MCF 10A (cell line): ENCODE measurements at regions of chr3 and their contacts with region 1.

Region 1: DNA sequence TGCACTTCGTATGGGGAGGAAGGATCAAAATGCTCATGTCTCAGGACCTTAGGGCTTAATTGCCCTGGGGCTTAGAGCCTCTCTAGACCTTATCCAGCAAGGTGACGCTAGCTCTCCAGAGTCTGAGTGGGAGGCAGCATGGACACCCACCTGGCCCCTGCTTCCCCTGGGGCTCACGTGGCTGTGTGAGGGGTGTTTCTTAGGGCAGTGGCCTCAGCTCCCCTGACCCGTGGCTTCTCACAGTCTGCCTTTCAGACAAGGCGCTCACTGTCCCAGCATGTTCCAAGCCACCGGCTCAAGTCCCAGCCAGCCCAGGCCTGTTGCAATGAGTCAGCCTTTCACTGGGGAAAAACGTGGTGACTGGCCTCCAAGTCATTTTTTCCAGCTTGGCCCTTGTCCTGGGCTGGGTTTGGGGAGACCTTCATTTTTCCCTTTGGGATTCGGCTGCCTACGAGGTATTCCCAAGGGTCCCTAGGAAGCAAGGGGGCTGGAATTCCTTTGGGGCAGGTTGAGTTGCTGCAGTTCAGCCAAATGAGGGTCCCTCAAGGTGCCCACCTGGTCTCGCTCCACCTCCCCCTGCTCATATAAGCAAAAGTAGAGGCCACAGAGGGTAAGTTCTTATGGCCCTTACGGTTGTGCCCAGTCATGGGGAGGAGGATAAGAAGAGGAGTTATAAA is 15.7 kb downstream of the BHLHE40 start:
- DNase-seq: peak; percentile 98
- H3K4me3 Mint-ChIP-seq: no peak overlapping the region
- H3K27ac Mint-ChIP-seq: peak overlapping the region; percentile 89
- H3K4me1 Mint-ChIP-seq: peaks cover 23% of the 10 kb centered on the region
- H3K27me3 Mint-ChIP-seq: no peaks in the 10 kb centered on the region
- CTCF ChIP-seq: no peak

Region 2: DNA sequence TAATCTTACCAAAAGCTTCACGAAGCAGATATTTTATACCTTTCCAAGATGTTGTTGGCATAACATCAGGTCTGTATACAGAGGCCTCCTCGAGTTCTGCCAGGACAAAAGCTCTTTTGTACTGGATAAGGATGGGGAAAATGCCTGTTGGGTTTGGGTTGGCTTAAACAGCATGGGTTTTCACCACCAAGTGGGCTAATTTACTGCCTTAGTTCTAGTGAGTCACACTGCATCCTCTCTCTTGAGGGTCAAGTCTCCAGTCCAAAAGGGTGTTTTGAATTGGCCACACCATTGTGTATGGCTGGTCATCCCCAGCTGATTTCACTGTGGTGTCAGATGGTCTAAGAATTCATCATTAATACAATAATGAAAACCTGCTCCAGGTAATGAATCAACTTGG is 41.8 kb before region 1 on chr3:
- CTCF ChIA-PET with region 1: no interaction called
- POLR2A ChIA-PET with region 1: no interaction called
- intact Hi-C with region 1: no loop called
- DNase-seq: no peak
- H3K4me3 Mint-ChIP-seq: no peak overlapping the region
- H3K27ac Mint-ChIP-seq: no peak overlapping the region
- H3K4me1 Mint-ChIP-seq: no peaks in the 10 kb centered on the region
- H3K27me3 Mint-ChIP-seq: no peaks in the 10 kb centered on the region
- CTCF ChIP-seq: no peak

Region 3: GRCh38 chr3:4963669-4964589 is 31.0 kb before region 1 on chr3:
- CTCF ChIA-PET with region 1: no interaction called
- POLR2A ChIA-PET with region 1: no interaction called
- intact Hi-C with region 1: no loop called
- DNase-seq: no peak
- H3K4me3 Mint-ChIP-seq: no peak overlapping the region
- H3K27ac Mint-ChIP-seq: no peak overlapping the region
- H3K4me1 Mint-ChIP-seq: no peaks in the 10 kb centered on the region
- H3K27me3 Mint-ChIP-seq: no peaks in the 10 kb centered on the region
- CTCF ChIP-seq: no peak

Region 4: GRCh38 chr3:5006755-5007202 is 11.8 kb after region 1 on chr3:
- CTCF ChIA-PET with region 1: interaction called, 3 read pairs
- POLR2A ChIA-PET with region 1: interaction called, 14 read pairs
- intact Hi-C with region 1: no loop called
- DNase-seq: no peak
- H3K4me3 Mint-ChIP-seq: no peak overlapping the region
- H3K27ac Mint-ChIP-seq: no peak overlapping the region
- H3K4me1 Mint-ChIP-seq: peaks cover 12% of the 10 kb centered on the region
- H3K27me3 Mint-ChIP-seq: no peaks in the 10 kb centered on the region
- CTCF ChIP-seq: no peak

Region 5: GRCh38 chr3:5136211-5136918 is 141.4 kb after region 1 on chr3:
- CTCF ChIA-PET with region 1: no interaction called
- POLR2A ChIA-PET with region 1: no interaction called
- intact Hi-C with region 1: no loop called
- DNase-seq: peak; percentile 66
- H3K4me3 Mint-ChIP-seq: peak overlapping the region; percentile 11
- H3K27ac Mint-ChIP-seq: peak overlapping the region; percentile 86
- H3K4me1 Mint-ChIP-seq: peaks cover 63% of the 10 kb centered on the region
- H3K27me3 Mint-ChIP-seq: no peaks in the 10 kb centered on the region
- CTCF ChIP-seq: peak; percentile 31